AG04449 (cell line): ENCODE measurements at regions of chr11 and their contacts with region 1.

Region 1: DNA sequence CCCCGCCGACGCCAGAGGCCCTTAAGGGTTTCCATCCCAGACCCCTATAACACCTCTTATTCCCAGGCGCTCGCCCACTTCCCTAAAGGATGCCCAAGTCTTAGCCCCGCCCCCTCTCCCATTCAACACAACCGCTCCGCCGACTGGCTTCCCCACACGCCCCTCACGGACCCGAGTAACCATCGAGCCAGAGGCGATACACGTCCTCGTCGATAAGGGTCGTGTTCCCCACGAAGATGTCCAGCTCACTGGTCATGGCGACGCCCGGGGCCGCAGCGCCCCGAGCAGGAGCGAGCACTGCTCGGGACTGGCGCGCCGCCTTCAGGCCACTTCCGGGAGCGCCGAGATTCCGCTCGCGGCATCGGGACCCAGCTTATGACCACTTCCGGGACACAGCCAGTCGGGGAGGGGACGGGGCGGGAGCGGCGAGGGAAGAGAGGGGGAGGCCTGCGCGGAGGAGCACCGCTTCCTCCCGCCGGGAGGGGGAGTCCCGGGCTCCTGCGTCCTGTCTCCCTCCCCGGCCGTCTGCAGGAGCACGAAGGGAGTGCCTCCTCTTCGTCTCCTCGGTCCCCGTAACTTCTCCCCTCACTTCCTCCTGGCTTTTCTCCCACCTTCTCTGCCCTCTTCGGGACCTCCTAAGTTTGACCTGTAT is at the start of gene FIBP:
- DNase-seq: peak; percentile 75
- H3K4me3 ChIP-seq: peak within 1 kb of the TSS; percentile 94
- CTCF ChIP-seq: no peak

Region 2: DNA sequence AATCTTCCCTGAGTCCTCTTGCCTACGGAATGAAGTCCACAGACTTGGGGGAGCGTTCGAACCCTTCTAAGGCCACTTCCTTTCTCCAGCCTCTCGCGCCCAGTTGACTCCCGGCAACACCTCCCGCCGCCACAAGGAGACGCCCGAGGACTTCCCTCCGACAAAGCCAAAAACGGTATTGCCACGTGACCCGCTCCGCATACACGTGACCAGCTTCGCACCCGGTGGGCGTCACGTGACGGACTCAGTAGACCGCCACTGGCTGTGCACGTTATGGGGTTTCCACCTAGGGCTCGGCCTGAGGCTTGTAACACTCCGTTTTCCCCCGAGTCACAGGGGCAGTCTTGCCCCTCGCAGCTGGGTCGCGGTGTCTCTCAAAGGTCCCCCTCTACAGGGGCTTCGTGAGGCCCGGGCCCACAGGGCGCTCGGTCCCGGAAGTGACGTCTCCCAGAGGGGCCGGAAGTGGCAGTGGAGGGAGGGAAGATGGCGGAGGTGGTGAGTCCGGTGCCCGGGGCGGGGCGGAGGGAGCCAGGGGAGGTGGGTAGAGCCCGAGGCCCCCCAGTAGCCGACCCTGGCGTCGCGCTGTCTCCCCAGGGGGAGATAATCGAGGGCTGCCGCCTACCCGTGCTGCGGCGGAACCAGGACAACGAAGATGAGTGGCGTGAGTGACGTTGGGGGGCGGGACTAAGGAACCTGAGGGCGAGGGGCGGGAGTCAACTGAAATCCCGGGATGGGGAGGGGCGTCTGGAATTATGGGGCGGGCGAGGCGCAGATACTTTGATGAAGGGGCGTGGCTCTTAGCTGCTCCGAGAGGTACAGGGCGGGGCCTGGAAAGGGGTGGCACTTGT is 176.3 kb before region 1 on chr11 and contains the start of gene KAT5:
- CTCF ChIA-PET with region 1: interaction called, 25 read pairs
- POLR2A ChIA-PET with region 1: interaction called, 4 read pairs
- DNase-seq: peak; percentile 83
- H3K4me3 ChIP-seq: peak within 1 kb of the TSS; percentile 87
- CTCF ChIP-seq: peak; percentile 94

Region 3: GRCh38 chr11:65833297-65834030 is 54.8 kb before region 1 on chr11 and contains the start of gene SNX32:
- CTCF ChIA-PET with region 1: no interaction called
- POLR2A ChIA-PET with region 1: no interaction called
- DNase-seq: no peak
- H3K4me3 ChIP-seq: peak within 1 kb of the TSS; percentile 75
- CTCF ChIP-seq: no peak

Region 4: DNA sequence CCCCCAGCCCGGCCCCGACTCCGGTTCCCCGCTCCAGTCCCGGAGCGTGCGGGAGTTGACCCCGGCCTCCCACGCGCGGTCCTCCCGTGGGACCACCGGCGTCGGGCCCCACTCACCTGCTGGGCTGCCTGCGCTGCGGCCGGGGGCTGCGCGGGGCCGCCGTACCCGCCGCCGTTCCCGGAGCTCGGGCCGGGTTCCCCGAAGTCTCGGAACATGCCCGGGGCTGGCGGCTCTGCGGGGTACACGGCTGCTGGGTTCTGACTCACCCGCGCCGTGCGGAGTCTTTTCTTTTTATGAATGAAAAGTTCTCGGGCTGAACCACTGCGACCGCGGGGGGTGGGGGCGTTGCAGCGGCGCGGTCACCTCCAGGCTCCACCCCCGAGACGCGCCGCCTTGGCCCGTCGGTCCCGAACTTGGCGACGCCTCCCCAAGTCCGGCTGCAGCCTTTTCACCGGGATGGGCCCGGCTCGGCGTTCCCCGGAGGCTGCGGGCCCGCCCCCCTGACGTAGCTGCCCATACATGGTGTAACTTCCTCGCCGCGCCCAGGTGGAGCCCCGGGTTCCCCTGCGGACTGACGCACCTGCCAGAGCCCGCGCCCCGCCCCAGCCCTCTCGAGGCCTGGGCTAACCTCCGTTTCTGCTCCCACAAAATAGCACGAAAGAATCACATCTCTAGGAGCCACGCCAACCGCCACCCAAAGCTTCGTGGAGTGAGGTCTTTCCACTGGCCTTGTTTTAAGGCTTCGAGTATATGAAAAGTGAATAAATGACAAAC is 12.0 kb after region 1 on chr11 and contains the start of gene FOSL1:
- CTCF ChIA-PET with region 1: interaction called, 394 read pairs
- POLR2A ChIA-PET with region 1: interaction called, 136 read pairs
- DNase-seq: peak; percentile 73
- H3K4me3 ChIP-seq: peak within 1 kb of the TSS; percentile 98
- CTCF ChIP-seq: no peak

Region 5: DNA sequence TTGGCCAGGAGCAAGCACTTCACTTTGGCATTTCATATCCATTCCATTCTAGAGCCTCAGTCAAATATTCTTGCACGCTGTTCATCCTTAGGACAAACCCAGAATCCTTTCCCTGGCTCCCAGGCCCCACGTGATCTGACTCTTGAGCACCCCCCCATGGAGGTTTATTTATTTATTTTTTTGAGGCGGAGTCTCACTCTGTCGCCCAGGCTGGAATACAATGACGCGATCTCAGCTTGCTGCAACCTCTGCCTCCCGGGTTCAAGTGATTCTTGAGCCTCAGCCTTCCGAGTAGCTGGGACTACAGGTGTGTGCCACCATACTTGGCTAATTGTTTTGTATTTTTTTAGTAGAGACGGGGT is 44.2 kb after region 1 on chr11:
- CTCF ChIA-PET with region 1: interaction called, 17 read pairs
- POLR2A ChIA-PET with region 1: interaction called, 3 read pairs
- DNase-seq: no peak
- H3K4me3 ChIP-seq: no peak overlapping the region
- CTCF ChIP-seq: no peak

Region 6: DNA sequence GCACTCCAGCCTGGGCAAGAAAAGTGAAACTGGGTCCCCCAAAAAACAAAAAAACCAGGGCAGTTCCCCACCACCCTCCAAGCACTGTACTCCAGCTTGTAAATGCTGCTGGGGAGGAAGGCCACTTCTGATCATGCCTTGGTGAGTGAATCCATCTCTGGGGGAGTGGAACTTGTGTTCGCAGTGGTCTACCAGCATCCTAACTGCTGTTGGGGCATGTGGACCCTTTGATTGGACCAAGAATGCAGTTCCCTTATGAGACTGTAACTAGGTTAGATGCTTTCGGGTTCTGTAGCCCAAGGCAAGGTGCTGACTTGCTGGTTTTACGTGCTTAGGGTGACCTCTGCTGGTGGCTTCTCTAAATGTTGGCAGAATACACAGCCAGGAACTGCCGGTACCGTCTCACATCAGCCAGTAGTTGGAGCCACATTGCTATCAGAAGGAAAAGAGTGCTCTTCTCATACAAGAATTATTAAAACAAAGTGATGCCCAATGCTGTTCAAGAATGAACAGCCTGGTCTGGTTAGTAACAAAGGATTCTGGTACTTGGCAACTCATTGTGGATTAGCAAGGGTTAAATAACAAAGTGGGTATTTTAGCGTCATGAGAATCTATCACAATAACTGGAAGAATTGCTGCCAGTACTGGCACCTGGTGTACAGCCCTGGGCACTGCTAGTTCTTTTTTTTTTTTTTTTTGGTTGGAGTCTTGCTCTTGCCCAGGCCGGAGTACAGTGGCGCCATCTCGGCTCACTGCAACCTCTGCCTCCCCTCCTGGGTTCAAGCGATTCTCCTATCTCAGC is 100.7 kb after region 1 on chr11:
- CTCF ChIA-PET with region 1: interaction called, 1,090 read pairs
- POLR2A ChIA-PET with region 1: interaction called, 3 read pairs
- DNase-seq: peak; percentile 79
- H3K4me3 ChIP-seq: no peak overlapping the region
- CTCF ChIP-seq: peak; percentile 94

Region 7: DNA sequence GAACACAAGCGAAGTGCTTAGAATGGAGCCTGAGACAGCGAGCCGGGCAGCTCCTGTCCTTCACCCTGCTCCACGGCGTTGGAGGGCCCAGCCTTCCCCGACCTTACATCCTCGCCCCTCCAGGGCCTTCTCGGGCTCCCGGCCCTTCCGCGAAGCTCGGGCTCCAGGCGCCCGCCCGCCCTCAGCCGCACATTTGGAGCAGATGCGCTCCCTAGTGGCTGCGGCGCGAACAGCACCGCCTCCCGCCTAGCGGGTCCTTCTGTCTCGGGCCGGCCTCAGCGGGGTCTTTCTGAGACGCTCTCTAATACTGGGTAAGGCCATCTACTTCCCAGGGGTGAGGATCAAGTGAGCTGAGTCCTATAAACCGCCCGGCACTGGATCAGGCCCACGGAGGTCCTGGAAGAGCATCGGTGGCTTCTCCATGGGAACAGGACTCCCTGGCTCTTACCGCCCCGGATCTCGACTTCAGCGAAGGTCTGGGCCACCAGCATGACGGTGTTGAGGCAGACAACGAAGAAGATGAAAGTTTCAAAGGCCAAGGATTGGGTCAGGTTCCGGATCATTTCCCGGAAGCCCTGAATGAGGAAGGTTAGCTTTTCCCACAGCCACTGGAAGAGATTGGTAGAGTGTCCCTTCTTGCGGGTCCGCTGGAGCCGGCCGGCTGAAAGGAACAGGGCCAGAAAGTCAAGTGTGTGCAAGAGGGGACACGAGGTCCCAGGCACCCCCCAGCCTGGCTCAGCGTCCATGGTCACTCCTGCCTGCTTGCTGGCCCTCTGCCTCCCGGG is 134.3 kb after region 1 on chr11:
- CTCF ChIA-PET with region 1: interaction called, 13 read pairs
- POLR2A ChIA-PET with region 1: no interaction called
- DNase-seq: no peak
- H3K4me3 ChIP-seq: no peak overlapping the region
- CTCF ChIP-seq: peak; percentile 97